ENCODE measurements at regions of chr13 and their contacts with region 1.

Region 1: DNA sequence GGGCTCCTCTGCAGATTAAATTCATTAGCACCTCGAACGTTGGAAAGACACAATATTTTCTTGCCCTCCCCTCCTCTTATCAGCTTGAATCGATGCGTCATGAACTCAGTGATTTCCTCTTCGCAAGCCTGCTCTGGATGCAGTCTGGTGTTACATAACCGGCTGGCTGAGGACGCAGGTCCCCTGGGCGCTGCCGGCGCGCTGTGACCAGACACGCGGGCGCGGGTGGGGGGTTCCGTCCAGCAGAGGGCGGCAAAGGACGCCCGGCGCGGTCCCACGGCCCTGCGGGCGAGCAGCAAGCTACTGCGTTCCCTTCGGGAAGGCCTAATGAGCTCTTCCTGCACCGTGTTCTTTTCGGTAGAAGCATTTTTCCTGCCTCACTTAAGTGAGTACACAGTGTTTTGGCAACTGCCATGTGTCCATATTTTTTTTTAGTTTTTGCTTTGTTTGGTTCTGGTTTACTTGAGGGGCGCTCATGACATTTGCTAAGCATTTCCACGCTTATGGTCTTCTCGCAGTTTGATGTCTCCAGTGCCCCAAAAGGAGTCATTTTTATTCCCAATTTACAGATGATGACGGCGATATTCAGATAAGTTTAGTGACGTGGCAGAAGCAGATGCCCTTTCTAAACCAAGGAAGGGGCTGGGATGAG is 112.2 kb upstream of the MBNL2 start:
- DNase-seq: peak; percentile 65
- H3K4me3 ChIP-seq: peak overlapping the region in 2 of 3 experiments; percentile 6 to 31
- H3K27ac ChIP-seq: peak overlapping the region; percentile 3
- H3K4me1 ChIP-seq: peaks cover 8% of the 10 kb centered on the region
- H3K27me3 ChIP-seq: peaks cover 6% of the 10 kb centered on the region
- CTCF ChIP-seq: peak; percentile 84 to 94 (median 94)

Region 2: DNA sequence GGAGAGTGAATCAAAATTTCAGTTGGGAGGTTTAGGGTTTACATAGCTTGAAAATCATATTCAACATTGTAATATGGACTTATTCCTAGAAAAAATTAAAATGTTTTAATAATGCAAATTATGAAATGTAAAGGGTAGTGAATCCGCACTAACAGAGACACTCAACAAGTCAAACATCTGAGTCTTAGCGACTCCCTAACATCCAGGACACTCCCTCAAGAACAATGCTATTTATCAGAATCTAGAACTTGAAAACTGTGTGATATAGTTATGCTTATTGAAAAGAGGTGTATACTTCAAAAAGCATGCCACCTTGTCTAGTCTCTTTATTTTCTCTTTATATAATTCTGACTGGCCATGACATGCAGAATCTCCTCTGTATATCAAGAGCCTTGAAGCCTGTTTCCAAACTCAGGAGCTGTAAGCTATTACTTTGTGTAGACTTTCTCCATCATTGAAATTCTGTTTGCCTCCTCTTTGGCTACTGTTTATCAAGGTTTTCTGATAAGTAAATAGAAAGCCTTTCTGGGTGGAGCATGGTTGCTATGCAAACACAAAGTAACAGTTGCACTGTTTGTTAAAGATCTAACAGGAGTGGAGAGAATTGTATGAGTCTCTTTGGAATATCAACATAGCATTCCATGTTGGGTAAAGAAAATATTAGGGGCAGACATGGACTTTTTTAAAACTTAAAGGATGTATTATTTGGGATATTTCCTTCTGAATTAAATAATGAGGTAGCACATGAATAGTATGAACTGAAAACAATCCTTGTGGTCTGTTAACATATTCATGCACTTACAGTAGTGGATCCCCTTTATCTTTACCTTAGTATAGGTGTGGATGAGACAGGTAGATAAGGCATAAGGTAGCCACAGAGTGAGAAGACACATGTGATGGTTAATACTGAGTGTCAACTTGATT is 55.8 kb after region 1 on chr13:
- dilution Hi-C with region 1: no loop called
- DNase-seq: no peak
- H3K4me3 ChIP-seq: no peak overlapping the region
- H3K27ac ChIP-seq: no peak overlapping the region
- H3K4me1 ChIP-seq: no peaks in the 10 kb centered on the region
- H3K27me3 ChIP-seq: no peaks in the 10 kb centered on the region
- CTCF ChIP-seq: no peak

Region 3: GRCh38 chr13:97212601-97213040 is 102.7 kb after region 1 on chr13:
- dilution Hi-C with region 1: loop called (anchors 10 kb)
- DNase-seq: no peak
- H3K4me3 ChIP-seq: no peak overlapping the region
- H3K27ac ChIP-seq: no peak overlapping the region
- H3K4me1 ChIP-seq: peaks cover 4% of the 10 kb centered on the region
- H3K27me3 ChIP-seq: no peaks in the 10 kb centered on the region
- CTCF ChIP-seq: peak; percentile 58 to 71 (median 66)

Measured in keratinocyte (primary cell).